Activated CD4-positive, alpha-beta T cell treated with anti-CD3 and anti-CD28 coated beads for 36 hours (primary cell): ENCODE measurements at regions of chr7 and their contacts with region 1.

Region 1: DNA sequence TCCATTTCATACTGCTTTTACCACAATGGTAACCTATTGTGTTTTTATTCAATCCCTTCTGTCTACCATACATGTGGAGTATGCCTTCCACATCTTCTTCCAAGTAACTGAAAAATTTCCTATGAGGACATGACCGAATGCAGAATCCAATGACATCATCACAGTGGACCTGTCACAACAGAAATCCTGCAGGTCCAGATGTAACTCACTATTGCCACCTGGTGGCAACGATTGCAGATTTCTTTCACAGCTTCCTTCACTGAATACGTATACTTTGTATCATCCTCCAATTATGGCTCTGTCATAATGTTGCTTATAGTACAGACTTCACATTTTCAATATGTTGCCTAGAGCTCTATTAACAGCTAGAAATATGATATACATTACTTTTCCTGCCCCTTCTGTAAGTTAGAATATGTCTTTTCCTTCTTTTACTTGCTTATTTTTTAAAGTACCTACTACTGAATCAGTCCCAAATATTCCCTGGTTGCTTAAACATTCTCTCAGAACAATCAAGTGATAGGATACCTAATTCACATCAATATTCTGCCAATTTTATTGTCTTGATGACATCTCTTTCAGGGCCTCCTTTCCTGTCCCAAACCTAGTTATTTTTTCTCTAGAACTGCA is 45.4 kb downstream of the SLC13A1 start:
- DNase-seq: peak; percentile 68
- ATAC-seq: peak; percentile 60
- H3K4me3 Mint-ChIP-seq: no peak overlapping the region
- H3K27ac Mint-ChIP-seq: no peak overlapping the region
- H3K4me1 Mint-ChIP-seq: no peaks in the 10 kb centered on the region
- H3K27me3 Mint-ChIP-seq: no peaks in the 10 kb centered on the region

Region 2: DNA sequence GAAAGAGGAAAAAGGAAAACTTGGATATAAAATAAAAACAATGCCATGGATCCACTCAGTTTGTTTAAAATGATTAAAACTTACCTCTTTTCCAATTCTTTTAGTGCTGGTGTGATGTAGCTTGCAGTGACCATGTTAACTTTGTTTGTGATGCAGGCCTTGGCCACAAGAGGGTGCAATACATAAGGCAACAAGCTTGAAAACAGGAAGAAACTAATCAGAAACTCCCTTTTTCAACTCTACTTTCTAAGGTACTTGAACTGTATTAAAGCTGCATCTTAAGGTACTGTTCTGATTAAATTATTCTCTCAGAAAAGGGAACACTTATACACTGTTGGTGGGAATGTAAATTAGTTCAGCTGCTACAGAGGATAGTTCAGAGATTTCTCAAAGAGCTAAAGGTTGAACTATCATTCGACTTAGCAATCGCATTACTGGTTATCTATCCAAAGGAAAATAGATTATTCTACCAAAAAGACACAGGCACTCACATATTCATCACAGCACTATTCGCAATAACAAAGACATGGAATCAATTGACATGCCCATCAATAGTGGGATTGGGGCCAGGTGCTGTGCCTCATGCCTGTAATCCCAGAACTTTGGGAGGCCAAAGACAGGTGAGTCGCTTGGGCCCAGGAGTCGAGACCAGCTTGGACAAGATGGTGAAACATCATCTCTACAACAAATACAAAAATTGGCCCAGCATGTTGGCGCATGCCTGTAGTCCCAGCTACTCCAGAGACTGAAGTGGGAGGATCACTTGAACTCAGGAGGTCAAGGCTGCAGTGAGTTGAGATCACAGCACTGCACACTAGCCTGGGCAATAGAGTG is 1061.2 kb before region 1 on chr7:
- CTCF ChIA-PET with region 1: no interaction called
- POLR2A ChIA-PET with region 1: no interaction called
- intact Hi-C with region 1: loop called in 1 of 2 experiments (anchors 10 kb)
- DNase-seq: peak; percentile 75
- ATAC-seq: no peak
- H3K4me3 Mint-ChIP-seq: no peak overlapping the region
- H3K27ac Mint-ChIP-seq: no peak overlapping the region
- H3K4me1 Mint-ChIP-seq: no peaks in the 10 kb centered on the region
- H3K27me3 Mint-ChIP-seq: no peaks in the 10 kb centered on the region

Region 3: GRCh38 chr7:122219253-122219865 is 935.0 kb before region 1 on chr7:
- CTCF ChIA-PET with region 1: no interaction called
- POLR2A ChIA-PET with region 1: no interaction called
- intact Hi-C with region 1: loop called in 1 of 2 experiments (anchors 2 kb)
- DNase-seq: no peak
- ATAC-seq: no peak
- H3K4me3 Mint-ChIP-seq: no peak overlapping the region
- H3K27ac Mint-ChIP-seq: no peak overlapping the region
- H3K4me1 Mint-ChIP-seq: no peaks in the 10 kb centered on the region
- H3K27me3 Mint-ChIP-seq: peaks cover 4% of the 10 kb centered on the region

Region 4: DNA sequence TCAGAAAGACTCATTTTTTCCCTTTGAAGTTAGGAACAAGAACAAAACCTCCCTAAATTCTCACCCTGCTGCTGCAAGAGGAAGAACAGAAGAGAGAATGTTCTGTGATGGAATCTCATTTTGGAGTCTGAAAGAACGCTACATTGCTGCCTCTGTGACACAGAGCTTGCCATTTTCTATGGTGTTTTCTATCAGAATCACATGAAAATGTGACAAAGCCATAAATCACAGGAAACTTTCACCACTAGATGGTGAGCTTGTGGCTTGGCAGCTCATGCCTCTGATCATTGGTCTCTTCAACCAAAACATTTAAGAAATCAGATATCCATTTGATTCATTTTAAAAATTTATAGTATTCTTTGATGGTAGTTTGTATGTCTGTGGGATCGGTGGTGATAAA is 351.0 kb before region 1 on chr7:
- CTCF ChIA-PET with region 1: no interaction called
- POLR2A ChIA-PET with region 1: no interaction called
- intact Hi-C with region 1: loop called in 1 of 2 experiments (anchors 5 kb)
- DNase-seq: no peak
- ATAC-seq: no peak
- H3K4me3 Mint-ChIP-seq: no peak overlapping the region
- H3K27ac Mint-ChIP-seq: no peak overlapping the region
- H3K4me1 Mint-ChIP-seq: no peaks in the 10 kb centered on the region
- H3K27me3 Mint-ChIP-seq: no peaks in the 10 kb centered on the region

Region 5: DNA sequence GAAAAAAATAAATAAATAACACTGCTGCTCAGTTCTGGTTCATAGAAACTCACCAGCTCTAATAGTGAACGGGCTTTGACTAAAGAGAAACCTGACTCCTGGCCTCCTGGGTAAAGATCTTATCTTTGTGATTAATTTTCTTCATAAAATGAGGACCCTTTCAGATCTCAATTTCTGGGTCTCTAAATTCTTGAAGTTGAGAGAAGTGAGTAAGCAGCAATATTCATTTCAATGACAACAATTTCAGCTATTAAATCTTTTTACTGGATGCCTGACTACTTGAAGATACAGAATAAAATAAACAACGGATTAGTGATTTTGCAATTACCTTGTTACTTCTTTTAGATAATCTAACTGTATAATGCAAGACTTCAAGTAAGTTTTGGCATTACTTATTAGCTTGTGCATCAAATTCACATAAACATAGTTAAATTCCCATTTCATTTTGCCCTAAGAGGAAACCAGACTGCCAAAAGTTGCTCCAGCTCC is 271.1 kb before region 1 on chr7:
- CTCF ChIA-PET with region 1: no interaction called
- POLR2A ChIA-PET with region 1: no interaction called
- intact Hi-C with region 1: no loop called
- DNase-seq: no peak
- ATAC-seq: no peak
- H3K4me3 Mint-ChIP-seq: no peak overlapping the region
- H3K27ac Mint-ChIP-seq: no peak overlapping the region
- H3K4me1 Mint-ChIP-seq: peaks cover 8% of the 10 kb centered on the region
- H3K27me3 Mint-ChIP-seq: peaks cover 28% of the 10 kb centered on the region

Region 6: DNA sequence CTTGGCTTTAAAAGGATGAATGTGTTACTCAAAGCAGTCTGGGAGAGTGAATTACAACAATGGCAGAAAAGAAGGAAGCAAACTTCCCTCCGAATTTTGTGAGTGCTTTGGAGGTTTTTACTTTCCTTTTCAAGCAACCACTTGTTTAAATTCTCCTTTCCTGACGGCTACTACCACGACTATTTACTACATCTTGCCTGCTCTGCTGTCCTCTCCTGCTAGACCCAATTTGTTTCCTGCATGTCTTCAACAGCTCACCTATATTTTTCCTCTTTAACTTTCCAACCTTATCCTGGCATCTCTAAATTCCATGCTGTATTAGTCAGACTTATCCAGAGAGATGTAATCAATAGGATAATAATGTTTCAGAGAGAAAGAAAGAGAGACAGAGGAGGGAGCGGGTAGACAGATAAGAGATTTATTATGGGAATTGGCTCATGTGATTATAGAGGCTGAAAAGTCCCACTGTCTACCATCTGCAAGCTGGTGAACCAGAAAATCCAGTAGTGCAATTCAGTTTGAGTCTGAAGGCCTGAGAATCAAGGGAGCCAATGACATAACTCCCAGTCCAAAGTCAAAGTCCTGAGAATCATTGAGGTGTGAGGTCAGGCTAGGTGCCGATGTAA is 88.2 kb after region 1 on chr7:
- CTCF ChIA-PET with region 1: no interaction called
- POLR2A ChIA-PET with region 1: no interaction called
- intact Hi-C with region 1: no loop called
- DNase-seq: no peak
- ATAC-seq: no peak
- H3K4me3 Mint-ChIP-seq: no peak overlapping the region
- H3K27ac Mint-ChIP-seq: no peak overlapping the region
- H3K4me1 Mint-ChIP-seq: no peaks in the 10 kb centered on the region
- H3K27me3 Mint-ChIP-seq: no peaks in the 10 kb centered on the region